PC-3 (cell line): ENCODE measurements at regions of chr1 and their contacts with region 1.

Region 1: DNA sequence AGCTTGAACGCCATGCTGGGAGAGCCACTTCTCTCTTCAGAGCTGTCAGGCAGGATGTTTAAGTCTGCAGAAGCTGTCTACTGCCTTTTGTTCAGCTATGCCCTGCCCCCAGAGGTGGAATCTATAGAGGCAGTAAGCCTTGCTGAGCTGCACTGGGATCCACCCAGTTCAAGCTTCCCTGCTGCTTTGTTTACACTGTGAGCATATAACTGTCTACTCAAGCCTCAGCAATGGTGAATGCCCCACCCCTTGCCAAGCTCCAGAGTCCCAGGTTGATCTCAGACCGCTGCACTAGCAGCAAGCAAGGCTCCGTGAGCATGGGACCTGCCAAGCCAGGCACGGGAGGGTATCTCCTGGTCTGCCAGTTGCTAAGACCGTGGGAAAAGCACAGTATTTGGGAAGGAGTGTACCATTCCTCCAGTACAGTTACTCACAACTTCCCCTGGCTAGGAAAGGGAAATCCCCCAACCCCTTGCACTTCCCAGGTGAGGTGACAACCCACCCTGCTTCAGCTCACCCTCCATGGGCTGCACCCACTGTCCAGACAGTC is 32.6 kb downstream of the RGS13 start:
- DNase-seq: peak; percentile 83
- ATAC-seq: peak; percentile 96
- H3K4me3 ChIP-seq: peak overlapping the region; percentile 38; the same call in 1 of the 2 replicates
- H3K27ac ChIP-seq: peak overlapping the region; percentile 96
- H3K4me1 ChIP-seq: peaks cover 22% of the 10 kb centered on the region
- H3K27me3 ChIP-seq: no peaks in the 10 kb centered on the region
- CTCF ChIP-seq: no peak

Region 2: GRCh38 chr1:192609110-192610079 is 59.1 kb before region 1 on chr1:
- CTCF ChIA-PET with region 1: no interaction called
- POLR2A ChIA-PET with region 1: no interaction called
- intact Hi-C with region 1: loop called (anchors 10 kb)
- DNase-seq: no peak
- ATAC-seq: no peak
- H3K4me3 ChIP-seq: no peak overlapping the region
- H3K27ac ChIP-seq: no peak overlapping the region
- H3K4me1 ChIP-seq: no peaks in the 10 kb centered on the region
- H3K27me3 ChIP-seq: no peaks in the 10 kb centered on the region
- CTCF ChIP-seq: no peak

Region 3: GRCh38 chr1:192766009-192766625 is 97.6 kb after region 1 on chr1:
- CTCF ChIA-PET with region 1: no interaction called
- POLR2A ChIA-PET with region 1: no interaction called
- intact Hi-C with region 1: loop called (anchors 10 kb)
- DNase-seq: peak; percentile 70
- ATAC-seq: peak; percentile 84
- H3K4me3 ChIP-seq: no peak overlapping the region
- H3K27ac ChIP-seq: no peak overlapping the region
- H3K4me1 ChIP-seq: peaks cover 32% of the 10 kb centered on the region
- H3K27me3 ChIP-seq: no peaks in the 10 kb centered on the region
- CTCF ChIP-seq: no peak

Region 4: DNA sequence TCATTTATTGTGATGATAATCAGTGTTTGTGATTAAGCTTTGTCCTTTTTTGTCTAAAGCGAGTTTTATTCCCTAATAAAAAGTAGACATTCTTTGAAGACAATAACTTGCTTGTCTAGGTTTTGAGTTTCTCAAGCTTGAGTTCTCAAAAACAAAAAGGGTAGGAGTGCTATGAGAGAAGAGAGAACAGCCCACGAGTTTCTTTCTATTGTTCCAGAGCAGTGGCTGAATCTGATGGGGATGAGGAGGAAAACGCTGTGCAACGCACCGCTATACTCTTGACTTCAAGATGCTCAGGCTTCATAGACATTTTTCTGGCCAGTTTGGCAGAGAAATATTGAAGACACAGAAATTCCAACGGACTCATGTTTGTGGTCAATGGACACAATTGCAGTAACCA is 1187.8 kb after region 1 on chr1:
- CTCF ChIA-PET with region 1: no interaction called
- POLR2A ChIA-PET with region 1: no interaction called
- intact Hi-C with region 1: no loop called
- DNase-seq: no peak
- ATAC-seq: no peak
- H3K4me3 ChIP-seq: no peak overlapping the region
- H3K27ac ChIP-seq: no peak overlapping the region
- H3K4me1 ChIP-seq: no peaks in the 10 kb centered on the region
- H3K27me3 ChIP-seq: no peaks in the 10 kb centered on the region
- CTCF ChIP-seq: no peak